GM18951 (cell line): ENCODE measurements at regions of chr18 and their contacts with region 1.

Region 1: GRCh38 chr18:8704361-8705279 is 736 bp upstream of the MTCL1 start:
- POLR2A ChIP-seq: no peak

Region 2: DNA sequence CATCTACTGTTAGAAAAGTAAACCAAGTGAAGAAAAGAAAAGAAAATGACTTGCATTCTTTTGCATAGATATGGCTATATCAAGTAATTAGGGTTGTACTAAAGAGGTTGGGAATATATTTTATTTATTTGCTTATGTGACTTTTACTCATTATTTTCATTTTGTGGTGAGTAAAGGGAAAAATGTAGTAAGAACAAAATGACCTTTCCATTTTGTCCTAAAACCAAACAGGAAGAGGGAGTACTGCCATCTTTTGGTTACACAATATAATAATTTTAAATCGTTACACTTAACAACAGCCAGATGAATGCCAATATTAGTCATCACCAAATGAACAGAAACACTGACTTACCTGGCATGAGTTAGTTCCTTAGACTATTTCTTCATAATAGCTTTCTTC is 350.6 kb after region 1 on chr18:
- in situ Hi-C with region 1: loop called (anchors 10 kb)
- POLR2A ChIP-seq: no peak

Region 3: DNA sequence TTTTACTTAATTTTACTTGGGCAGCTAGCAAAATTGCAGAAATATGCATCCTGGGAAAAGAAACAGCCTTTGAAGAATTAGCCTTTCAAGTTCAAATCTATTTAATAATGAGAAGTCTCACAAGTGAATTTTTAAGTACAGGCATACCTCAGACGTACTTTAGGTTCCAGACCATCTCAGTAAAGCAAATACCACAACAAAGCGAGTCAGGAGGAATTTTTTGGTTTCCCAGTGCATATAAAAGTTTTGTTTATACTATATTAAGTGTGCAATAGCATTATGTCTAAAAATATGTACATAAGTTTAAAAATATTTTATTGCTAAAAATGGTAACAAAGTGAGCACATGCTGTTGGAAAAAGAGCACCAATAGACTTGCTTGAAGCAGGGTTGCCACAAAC is 579.2 kb after region 1 on chr18:
- in situ Hi-C with region 1: no loop called
- POLR2A ChIP-seq: no peak